ENCODE measurements at regions of chr13 and their contacts with region 1.

Region 1: GRCh38 chr13:79516595-79516994 is 35.6 kb downstream of the NDFIP2 start:
- DNase-seq: no peak
- ATAC-seq: no peak
- H3K4me3 Mint-ChIP-seq: no peak overlapping the region
- H3K27ac Mint-ChIP-seq: no peak overlapping the region
- H3K4me1 Mint-ChIP-seq: peaks cover 59% of the 10 kb centered on the region
- H3K27me3 Mint-ChIP-seq: no peaks in the 10 kb centered on the region

Region 2: GRCh38 chr13:79311386-79311785 is 205.2 kb before region 1 on chr13:
- CTCF ChIA-PET with region 1: no interaction called
- DNase-seq: no peak
- ATAC-seq: no peak
- H3K4me3 Mint-ChIP-seq: no peak overlapping the region
- H3K27ac Mint-ChIP-seq: no peak overlapping the region
- H3K4me1 Mint-ChIP-seq: no peaks in the 10 kb centered on the region
- H3K27me3 Mint-ChIP-seq: peaks cover 12% of the 10 kb centered on the region

Region 3: GRCh38 chr13:79480954-79481684 is 35.5 kb before region 1 on chr13 and contains the start of gene NDFIP2:
- CTCF ChIA-PET with region 1: interaction called, 10 read pairs
- DNase-seq: peak; percentile 91
- ATAC-seq: peak; percentile 83
- H3K4me3 Mint-ChIP-seq: peak within 1 kb of the TSS; percentile 91
- H3K27ac Mint-ChIP-seq: peak within 1 kb of the TSS; percentile 84
- H3K4me1 Mint-ChIP-seq: peaks cover 52% of the 10 kb centered on the region
- H3K27me3 Mint-ChIP-seq: peaks cover 12% of the 10 kb centered on the region
- total RNA-seq, gene NDFIP2: 50.8 to 124 TPM

Region 4: DNA sequence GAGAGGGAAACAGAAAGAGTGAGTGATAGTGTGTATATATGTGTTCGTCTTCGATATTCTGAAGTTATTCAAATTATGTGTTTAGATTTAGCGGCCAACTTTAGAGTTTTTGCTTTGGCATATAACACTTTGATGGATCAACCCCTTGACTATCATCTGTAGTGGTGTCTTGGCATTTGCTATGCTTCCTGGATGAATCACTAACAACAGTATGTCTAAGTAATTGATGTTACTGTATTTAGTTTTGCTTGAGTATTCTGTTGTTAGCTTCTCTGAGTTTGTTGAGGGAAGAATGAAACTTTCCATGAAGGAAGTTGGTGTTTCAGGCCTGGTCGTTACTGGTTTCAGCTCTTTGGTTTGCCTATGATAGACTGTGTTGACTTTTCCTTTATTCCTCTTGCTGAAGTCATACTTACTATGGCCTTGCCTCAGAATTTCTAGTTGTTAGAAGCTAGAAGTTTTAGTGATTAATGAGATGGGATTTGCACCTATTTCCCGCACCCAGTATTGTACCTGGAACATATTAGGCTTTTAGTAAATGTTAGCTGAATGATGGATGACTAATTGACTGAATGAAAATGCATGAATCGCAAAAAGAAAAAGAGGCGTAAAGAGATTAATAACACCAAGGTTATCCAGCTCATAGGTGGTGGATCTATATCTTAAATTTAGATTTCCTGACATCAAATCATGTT is 14.9 kb before region 1 on chr13:
- CTCF ChIA-PET with region 1: interaction called, 10 read pairs
- DNase-seq: no peak
- ATAC-seq: peak; percentile 48
- H3K4me3 Mint-ChIP-seq: no peak overlapping the region
- H3K27ac Mint-ChIP-seq: peak overlapping the region; percentile 44
- H3K4me1 Mint-ChIP-seq: peaks cover 74% of the 10 kb centered on the region
- H3K27me3 Mint-ChIP-seq: no peaks in the 10 kb centered on the region

Measured in activated CD8-positive, alpha-beta memory T cell treated with anti-CD3 and anti-CD28 coated beads, Interleukin-2, amount 10 ng/mL, durations not matched to agents 7 days and 5 days (primary cell).